SK-N-SH (cell line): ENCODE measurements at regions of chr1 and their contacts with region 1.

Region 1: DNA sequence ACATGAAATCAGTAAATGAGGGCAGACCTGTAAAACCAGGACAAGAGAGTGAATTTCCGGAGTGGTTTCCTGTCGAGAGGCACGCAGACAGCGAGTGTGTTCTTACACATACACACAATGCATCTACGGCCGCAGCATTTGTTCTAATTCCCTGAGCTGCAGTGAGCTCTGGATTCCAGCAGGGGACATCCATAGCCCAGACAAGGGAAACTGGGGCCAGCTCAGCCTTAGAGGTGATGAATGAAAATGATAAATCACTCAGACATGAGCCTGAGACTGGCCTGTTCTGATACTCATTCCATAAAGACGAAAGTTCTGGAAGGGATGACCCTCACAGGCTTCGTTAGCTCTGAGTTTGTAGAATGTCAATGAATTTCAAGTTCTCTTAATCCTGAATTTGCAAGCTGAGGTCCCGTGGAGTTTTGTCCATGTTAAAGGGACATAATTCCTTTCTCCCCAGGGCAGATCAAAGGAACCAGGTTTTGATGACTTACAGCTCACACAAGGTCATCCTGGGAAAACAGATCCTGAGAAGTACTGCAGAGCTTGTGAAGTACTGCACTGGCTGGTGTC is 207.9 kb upstream of the C1orf87 start:
- DNase-seq: peak; percentile 79
- H3K4me3 ChIP-seq: peak overlapping the region in 1 of 2 experiments; percentile 24; a peak in 1 of 4 replicates
- H3K27ac ChIP-seq: peak overlapping the region; percentile 61 to 98; a peak in 3 of 4 replicates
- H3K4me1 ChIP-seq: peaks cover 20 to 21% of the 10 kb centered on the region in 2 experiments
- H3K27me3 ChIP-seq: no peaks in the 10 kb centered on the region
- CTCF ChIP-seq: peak; percentile 92
- EP300 ChIP-seq: peak; percentile 17 to 64; a peak in 3 of 4 replicates
- RAD21 ChIP-seq: peak; percentile 98

Region 2: DNA sequence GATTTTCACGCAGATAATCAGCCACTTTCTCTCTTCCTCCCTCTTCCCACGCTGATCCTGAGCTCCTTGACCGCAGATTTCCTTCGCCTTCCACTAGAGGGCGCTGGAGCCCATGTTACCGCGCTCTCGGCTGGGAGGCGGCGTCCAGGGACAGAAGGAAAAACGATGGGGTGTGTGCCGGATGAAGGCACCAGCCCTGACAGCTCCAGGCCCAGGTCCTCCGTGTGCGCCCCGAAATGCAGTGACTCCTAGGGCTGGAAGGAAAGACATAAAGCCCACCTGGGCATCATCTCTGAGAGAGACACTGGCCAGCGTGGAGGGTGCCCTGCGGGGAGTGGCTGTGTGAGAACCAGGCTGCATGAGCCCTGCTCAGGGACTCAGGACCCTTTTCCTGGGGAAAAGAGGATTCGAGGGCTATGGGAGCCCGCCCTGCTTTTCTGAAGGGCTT is 310.0 kb before region 1 on chr1:
- CTCF ChIA-PET with region 1: interaction called, 24 read pairs
- POLR2A ChIA-PET with region 1: no interaction called
- DNase-seq: peak; percentile 88
- H3K4me3 ChIP-seq: peak overlapping the region; percentile 13 to 42; a peak in 3 of 4 replicates
- H3K27ac ChIP-seq: no peak overlapping the region
- H3K4me1 ChIP-seq: peaks cover 0 to 5% of the 10 kb centered on the region in 2 experiments; a peak in 1 of 4 replicates
- H3K27me3 ChIP-seq: no peaks in the 10 kb centered on the region
- CTCF ChIP-seq: peak; percentile 96
- EP300 ChIP-seq: no peak
- RAD21 ChIP-seq: peak; percentile 93

Region 3: DNA sequence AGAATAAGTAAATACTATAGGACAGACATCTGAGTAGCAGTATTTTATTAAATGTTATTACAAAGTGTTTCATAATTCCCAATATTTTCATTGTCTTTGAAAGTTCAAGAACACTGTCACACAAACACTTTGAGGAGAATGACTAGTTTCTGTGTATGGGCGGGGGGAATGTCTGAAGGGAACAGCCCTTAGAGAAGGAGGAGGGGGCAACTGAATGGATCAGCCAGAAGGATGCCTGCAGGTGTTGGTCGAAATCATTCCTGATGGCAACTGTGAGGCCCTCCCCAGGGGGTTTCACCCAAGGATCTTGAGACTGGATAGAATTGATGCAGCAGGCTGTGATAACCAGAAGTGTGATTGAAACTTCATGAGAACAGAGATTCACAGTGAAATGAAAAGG is 15.3 kb after region 1 on chr1:
- CTCF ChIA-PET with region 1: interaction called, 11 read pairs
- POLR2A ChIA-PET with region 1: interaction called, 3 read pairs
- DNase-seq: no peak
- H3K4me3 ChIP-seq: no peak overlapping the region
- H3K27ac ChIP-seq: no peak overlapping the region
- H3K4me1 ChIP-seq: peaks cover 0 to 3% of the 10 kb centered on the region in 2 experiments; a peak in 2 of 4 replicates
- H3K27me3 ChIP-seq: no peaks in the 10 kb centered on the region
- CTCF ChIP-seq: no peak
- EP300 ChIP-seq: no peak
- RAD21 ChIP-seq: no peak

Region 4: DNA sequence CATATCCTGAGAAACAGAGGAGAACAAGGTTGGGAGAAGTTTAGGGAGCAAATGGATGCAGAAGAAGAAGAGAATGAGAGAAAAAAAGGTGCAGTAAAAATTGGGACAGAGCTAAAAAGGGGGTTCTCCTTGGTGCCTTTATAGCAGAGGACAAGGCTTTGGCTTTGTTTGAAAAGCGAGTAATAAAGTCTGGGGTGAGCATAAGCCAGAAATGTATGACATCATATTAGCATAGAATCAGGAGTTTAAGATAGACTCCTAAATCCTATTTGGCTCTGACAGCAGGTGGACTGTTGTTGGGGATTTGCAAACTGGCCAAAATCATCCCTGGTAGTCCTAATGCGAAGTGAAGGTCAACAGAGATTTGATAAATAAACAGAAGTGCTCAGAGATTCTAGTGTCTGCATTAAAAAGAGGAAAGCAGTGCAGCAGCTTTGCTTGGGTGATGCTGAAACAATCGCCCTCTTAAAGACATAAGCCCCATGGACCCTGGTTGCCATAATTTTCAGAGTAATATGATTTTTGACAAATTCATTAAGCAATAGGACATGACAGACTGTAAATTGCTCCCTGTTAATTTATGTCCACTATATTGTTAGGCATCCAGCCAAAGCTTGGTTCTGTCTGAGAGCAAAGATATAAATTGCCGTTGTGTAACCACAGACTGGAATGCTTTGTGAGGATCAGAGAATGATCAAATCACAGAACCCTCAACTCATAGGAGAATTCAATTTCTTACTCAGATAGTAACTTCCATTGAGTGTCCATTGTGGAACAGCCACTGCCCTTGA is 416.0 kb after region 1 on chr1:
- CTCF ChIA-PET with region 1: interaction called, 11 read pairs
- POLR2A ChIA-PET with region 1: interaction called, 4 read pairs
- DNase-seq: peak; percentile 57
- H3K4me3 ChIP-seq: no peak overlapping the region
- H3K27ac ChIP-seq: peak overlapping the region in 1 of 2 experiments; percentile 99; a peak in 2 of 4 replicates
- H3K4me1 ChIP-seq: peaks cover 0 to 27% of the 10 kb centered on the region in 2 experiments; a peak in 2 of 4 replicates
- H3K27me3 ChIP-seq: no peaks in the 10 kb centered on the region
- CTCF ChIP-seq: no peak
- EP300 ChIP-seq: peak in 1 of 2 experiments; percentile 86; a peak in 2 of 4 replicates
- RAD21 ChIP-seq: peak; percentile 28; the same call in 1 of the 2 replicates

Region 5: GRCh38 chr1:60857851-60858250 is 576.4 kb after region 1 on chr1:
- CTCF ChIA-PET with region 1: interaction called, 35 read pairs
- POLR2A ChIA-PET with region 1: interaction called, 4 read pairs
- DNase-seq: no peak
- H3K4me3 ChIP-seq: no peak overlapping the region
- H3K27ac ChIP-seq: peak overlapping the region in 1 of 2 experiments; percentile 23; a peak in 2 of 4 replicates
- H3K4me1 ChIP-seq: peaks cover 8 to 42% of the 10 kb centered on the region in 2 experiments; a peak in 3 of 4 replicates
- H3K27me3 ChIP-seq: no peaks in the 10 kb centered on the region
- CTCF ChIP-seq: no peak
- EP300 ChIP-seq: no peak
- RAD21 ChIP-seq: no peak